Ascending aorta (tissue), 2 donors: ENCODE measurements at regions of chr1 and their contacts with region 1.

Region 1: GRCh38 chr1:192521734-192522133 is 53.8 kb upstream of the RGS1 start:
- DNase-seq: no peak
- H3K4me3 ChIP-seq: no peak overlapping the region
- H3K27ac ChIP-seq: peak overlapping the region in 1 of 2 donors; percentile 27
- H3K4me1 ChIP-seq: peaks cover 8 to 27% of the 10 kb centered on the region in 2 donors
- H3K27me3 ChIP-seq: no peaks in the 10 kb centered on the region
- CTCF ChIP-seq: no peak

Region 2: DNA sequence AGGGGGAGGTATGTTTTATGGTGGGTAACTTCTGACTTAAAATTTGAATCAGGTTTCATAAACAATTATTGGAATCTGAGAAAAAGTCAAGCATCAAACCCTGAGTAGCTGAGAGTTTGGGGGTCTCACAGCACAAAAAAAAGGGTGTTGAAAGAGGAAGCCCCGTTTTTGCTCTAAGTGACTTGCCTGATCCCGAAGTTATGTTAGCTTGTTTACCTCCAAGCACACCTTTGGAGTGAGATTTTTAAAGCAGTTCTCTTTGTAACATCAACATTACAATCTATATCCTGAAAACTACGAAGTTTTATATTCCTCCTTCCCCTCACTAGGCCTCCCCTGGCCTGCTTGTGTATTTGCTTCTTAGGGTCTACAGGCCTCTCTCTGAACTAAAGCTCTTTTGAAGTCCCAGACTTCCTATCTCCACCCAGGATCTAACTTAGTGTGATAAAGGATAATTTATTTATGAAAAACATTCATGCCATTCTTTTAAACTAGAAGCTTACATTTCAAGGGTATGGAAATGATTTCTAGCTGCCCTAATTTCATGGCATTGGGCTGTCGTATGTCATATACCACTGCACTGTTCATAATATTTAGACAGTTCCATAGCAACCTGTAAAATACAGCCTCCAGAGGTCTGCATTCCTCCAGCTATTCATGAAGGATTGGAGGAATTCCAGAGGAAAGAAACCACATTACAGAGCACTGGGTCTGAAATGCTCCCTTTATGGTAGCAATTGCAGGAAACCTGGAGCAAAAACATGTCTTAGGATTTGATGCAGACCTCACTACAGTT is 17.8 kb after region 1 on chr1:
- intact Hi-C with region 1: loop called (anchors 2 kb)
- DNase-seq: no peak
- H3K4me3 ChIP-seq: no peak overlapping the region
- H3K27ac ChIP-seq: peak overlapping the region; percentile 81 to 90
- H3K4me1 ChIP-seq: peaks cover 12 to 21% of the 10 kb centered on the region in 2 donors
- H3K27me3 ChIP-seq: no peaks in the 10 kb centered on the region
- CTCF ChIP-seq: no peak

Region 3: GRCh38 chr1:192559115-192560006 is 37.6 kb after region 1 on chr1:
- intact Hi-C with region 1: loop called (anchors 2 kb)
- DNase-seq: no peak
- H3K4me3 ChIP-seq: no peak overlapping the region
- H3K27ac ChIP-seq: peak overlapping the region; percentile 73 to 77
- H3K4me1 ChIP-seq: peaks cover 0 to 7% of the 10 kb centered on the region in 2 donors
- H3K27me3 ChIP-seq: no peaks in the 10 kb centered on the region
- CTCF ChIP-seq: no peak

Region 4: DNA sequence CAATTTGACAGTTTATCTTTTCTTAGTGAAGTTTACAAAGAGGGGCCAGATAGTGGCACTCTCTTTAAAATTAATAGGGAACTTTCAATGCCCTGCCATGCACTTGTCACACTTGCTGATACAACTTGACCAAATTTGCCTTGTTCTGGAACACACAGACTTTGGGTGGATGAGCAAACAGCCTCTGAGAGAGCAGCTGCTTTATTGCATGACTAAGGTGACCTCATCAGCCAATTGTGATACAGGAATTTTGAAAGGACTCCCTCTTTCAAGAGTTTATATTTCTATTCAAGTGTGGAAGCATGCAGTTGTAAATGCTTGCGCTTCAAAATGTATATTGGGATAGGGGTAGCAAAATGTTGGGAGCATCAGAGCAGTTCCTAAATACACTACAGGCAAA is 51.8 kb after region 1 on chr1:
- intact Hi-C with region 1: no loop called
- DNase-seq: no peak
- H3K4me3 ChIP-seq: no peak overlapping the region
- H3K27ac ChIP-seq: no peak overlapping the region
- H3K4me1 ChIP-seq: no peaks in the 10 kb centered on the region
- H3K27me3 ChIP-seq: no peaks in the 10 kb centered on the region
- CTCF ChIP-seq: no peak

Region 5: GRCh38 chr1:192739476-192740184 is 217.9 kb after region 1 on chr1:
- intact Hi-C with region 1: no loop called
- DNase-seq: no peak
- H3K4me3 ChIP-seq: no peak overlapping the region
- H3K27ac ChIP-seq: no peak overlapping the region
- H3K4me1 ChIP-seq: no peaks in the 10 kb centered on the region
- H3K27me3 ChIP-seq: no peaks in the 10 kb centered on the region
- CTCF ChIP-seq: no peak

Region 6: DNA sequence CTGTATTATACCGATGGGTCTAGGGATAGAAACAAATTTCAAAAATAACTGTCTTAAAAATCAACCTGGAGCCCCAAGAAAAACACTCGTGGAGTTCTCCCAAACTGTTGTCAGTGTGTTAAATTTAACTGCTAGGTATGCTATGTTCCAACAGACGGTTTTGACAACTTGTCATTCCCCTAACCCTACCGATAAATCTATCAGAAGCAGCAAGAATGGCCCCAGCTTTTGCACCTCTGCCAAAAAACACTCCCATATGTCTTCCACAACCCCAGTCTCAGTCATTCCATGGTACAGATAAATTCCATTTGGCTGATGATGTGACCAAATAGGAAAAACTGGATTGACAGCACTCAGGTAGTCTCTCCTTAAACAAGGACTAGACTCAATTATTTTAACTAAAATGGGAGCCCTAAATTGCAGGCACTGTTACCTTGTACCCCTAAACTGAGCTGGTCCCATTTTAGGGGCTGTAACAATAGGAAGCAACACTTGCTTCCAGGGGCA is 532.5 kb after region 1 on chr1:
- intact Hi-C with region 1: no loop called
- DNase-seq: no peak
- H3K4me3 ChIP-seq: no peak overlapping the region
- H3K27ac ChIP-seq: no peak overlapping the region
- H3K4me1 ChIP-seq: peaks cover 0 to 9% of the 10 kb centered on the region in 2 donors
- H3K27me3 ChIP-seq: no peaks in the 10 kb centered on the region
- CTCF ChIP-seq: no peak